ENCODE measurements at regions of chr4 and their contacts with region 1.

Region 1: DNA sequence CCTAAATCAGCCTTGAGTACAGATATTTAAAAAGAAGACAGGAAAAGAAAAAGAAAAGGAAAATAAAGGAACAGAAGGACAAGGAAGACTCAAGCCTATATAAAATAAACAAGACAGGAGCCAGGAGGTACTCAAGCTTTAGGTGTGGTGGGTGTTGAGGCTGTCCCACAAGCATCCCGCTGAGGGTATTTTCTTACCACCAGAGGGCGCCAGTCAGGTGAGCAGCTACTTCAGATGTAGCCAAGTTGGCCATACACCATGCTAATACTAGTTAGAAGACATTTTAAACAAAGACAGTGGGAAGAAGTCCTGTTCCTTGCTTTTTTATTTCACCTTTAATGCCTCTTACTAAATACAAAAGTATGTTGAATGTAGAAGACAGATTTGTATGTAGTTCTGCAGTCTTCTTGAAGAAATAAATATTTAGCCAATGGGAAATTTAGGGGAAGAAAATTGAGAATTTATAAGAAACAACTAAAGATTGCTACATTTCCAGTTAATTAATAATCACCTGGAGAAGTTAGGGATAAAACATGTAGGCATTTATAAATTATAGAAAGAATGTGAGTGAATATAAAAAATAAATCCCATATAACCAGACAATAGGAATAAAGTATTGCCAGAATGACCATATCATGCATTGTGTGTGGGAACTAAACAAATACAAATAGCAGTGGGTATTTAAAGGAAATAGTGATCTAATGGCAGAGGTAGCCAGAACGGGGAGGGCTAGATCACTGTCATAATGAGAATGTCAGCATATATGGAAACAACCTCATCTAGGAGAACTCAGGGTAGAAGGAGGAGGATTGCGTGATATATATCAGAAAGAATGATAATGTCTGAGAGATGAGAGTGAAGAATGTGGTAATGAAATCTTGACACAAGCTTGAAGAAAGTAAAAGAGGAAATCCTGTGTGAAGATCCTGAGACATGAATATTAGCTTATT is 71.0 kb downstream of the MTHFD2L start:
- DNase-seq: peak; percentile 46 to 76 (median 70)
- ATAC-seq: peak; percentile 71
- H3K4me3 ChIP-seq: no peak overlapping the region
- H3K4me3 Mint-ChIP-seq: no peak overlapping the region
- H3K27ac ChIP-seq: no peak overlapping the region
- H3K27ac Mint-ChIP-seq: no peak overlapping the region
- H3K4me1 ChIP-seq: no peaks in the 10 kb centered on the region
- H3K4me1 Mint-ChIP-seq: no peaks in the 10 kb centered on the region
- H3K27me3 ChIP-seq: no peaks in the 10 kb centered on the region
- H3K27me3 Mint-ChIP-seq: no peaks in the 10 kb centered on the region
- CTCF ChIP-seq: peak; percentile 85

Region 2: GRCh38 chr4:74311696-74312313 is 82.8 kb after region 1 on chr4:
- CTCF ChIA-PET with region 1: interaction called, 8 read pairs
- POLR2A ChIA-PET with region 1: no interaction called
- intact Hi-C with region 1: loop called (anchors 1 to 2 kb)
- DNase-seq: peak in 3 of 9 experiments; percentile 8 to 52 (median 39)
- ATAC-seq: no peak
- H3K4me3 ChIP-seq: no peak overlapping the region
- H3K4me3 Mint-ChIP-seq: no peak overlapping the region
- H3K27ac ChIP-seq: no peak overlapping the region
- H3K27ac Mint-ChIP-seq: no peak overlapping the region
- H3K4me1 ChIP-seq: peaks cover 4% of the 10 kb centered on the region
- H3K4me1 Mint-ChIP-seq: peaks cover 11% of the 10 kb centered on the region
- H3K27me3 ChIP-seq: no peaks in the 10 kb centered on the region
- H3K27me3 Mint-ChIP-seq: peaks cover 3% of the 10 kb centered on the region
- CTCF ChIP-seq: peak; percentile 48

Region 3: GRCh38 chr4:74531963-74532794 is 303.2 kb after region 1 on chr4:
- CTCF ChIA-PET with region 1: interaction called, 5 read pairs
- POLR2A ChIA-PET with region 1: no interaction called
- intact Hi-C with region 1: loop called (anchors 1 to 5 kb)
- DNase-seq: peak in 2 of 9 experiments; percentile 39 to 62
- ATAC-seq: peak; percentile 48
- H3K4me3 ChIP-seq: no peak overlapping the region
- H3K4me3 Mint-ChIP-seq: no peak overlapping the region
- H3K27ac ChIP-seq: no peak overlapping the region
- H3K27ac Mint-ChIP-seq: no peak overlapping the region
- H3K4me1 ChIP-seq: no peaks in the 10 kb centered on the region
- H3K4me1 Mint-ChIP-seq: no peaks in the 10 kb centered on the region
- H3K27me3 ChIP-seq: no peaks in the 10 kb centered on the region
- H3K27me3 Mint-ChIP-seq: peaks cover 5% of the 10 kb centered on the region
- CTCF ChIP-seq: peak; percentile 40

Region 4: GRCh38 chr4:74623041-74623440 is 394.1 kb after region 1 on chr4:
- CTCF ChIA-PET with region 1: interaction called, 6 read pairs
- POLR2A ChIA-PET with region 1: no interaction called
- intact Hi-C with region 1: loop called in 1 of 2 experiments (anchors 5 kb)
- DNase-seq: peak in 3 of 9 experiments; percentile 5 to 48 (median 34)
- ATAC-seq: peak; percentile 46
- H3K4me3 ChIP-seq: no peak overlapping the region
- H3K4me3 Mint-ChIP-seq: no peak overlapping the region
- H3K27ac ChIP-seq: no peak overlapping the region
- H3K27ac Mint-ChIP-seq: no peak overlapping the region
- H3K4me1 ChIP-seq: no peaks in the 10 kb centered on the region
- H3K4me1 Mint-ChIP-seq: peaks cover 13% of the 10 kb centered on the region
- H3K27me3 ChIP-seq: no peaks in the 10 kb centered on the region
- H3K27me3 Mint-ChIP-seq: peaks cover 2% of the 10 kb centered on the region
- CTCF ChIP-seq: peak; percentile 52

Region 5: GRCh38 chr4:76148142-76148865 is 1919.3 kb after region 1 on chr4 and contains the start of gene NUP54:
- CTCF ChIA-PET with region 1: no interaction called
- POLR2A ChIA-PET with region 1: no interaction called
- intact Hi-C with region 1: no loop called
- DNase-seq: peak; percentile 91 to 97 (median 95)
- ATAC-seq: peak; percentile 98
- H3K4me3 ChIP-seq: peak within 1 kb of the TSS; percentile 66 to 99
- H3K4me3 Mint-ChIP-seq: peak within 1 kb of the TSS; percentile 96
- H3K27ac ChIP-seq: peak within 1 kb of the TSS; percentile 90 to 93
- H3K27ac Mint-ChIP-seq: peak within 1 kb of the TSS; percentile 96
- H3K4me1 ChIP-seq: peaks cover 29% of the 10 kb centered on the region
- H3K4me1 Mint-ChIP-seq: peaks cover 45% of the 10 kb centered on the region
- H3K27me3 ChIP-seq: no peaks in the 10 kb centered on the region
- H3K27me3 Mint-ChIP-seq: no peaks in the 10 kb centered on the region
- CTCF ChIP-seq: no peak
- total RNA-seq, gene NUP54: 95.7 to 103 TPM